ENCODE measurements at regions of chr13 and their contacts with region 1.

Region 1: GRCh38 chr13:30465585-30466357 is at the start of gene HMGB1:
- DNase-seq: peak; percentile 86
- ATAC-seq: peak; percentile 83
- H3K4me3 Mint-ChIP-seq: peak within 1 kb of the TSS; percentile 93
- H3K27ac Mint-ChIP-seq: peak within 1 kb of the TSS; percentile 99
- H3K4me1 Mint-ChIP-seq: peaks cover 42% of the 10 kb centered on the region
- H3K27me3 Mint-ChIP-seq: peaks cover 3% of the 10 kb centered on the region
- CTCF ChIP-seq: no peak
- total RNA-seq, gene HMGB1: 338 and 354 TPM in 2 replicates

Region 2: GRCh38 chr13:29771247-29771646 is 694.5 kb before region 1 on chr13:
- CTCF ChIA-PET with region 1: no interaction called
- POLR2A ChIA-PET with region 1: no interaction called
- intact Hi-C with region 1: loop called (anchors 5 kb)
- DNase-seq: no peak
- ATAC-seq: peak; percentile 49
- H3K4me3 Mint-ChIP-seq: no peak overlapping the region
- H3K27ac Mint-ChIP-seq: no peak overlapping the region
- H3K4me1 Mint-ChIP-seq: peaks cover 5% of the 10 kb centered on the region
- H3K27me3 Mint-ChIP-seq: no peaks in the 10 kb centered on the region
- CTCF ChIP-seq: peak; percentile 29

Region 3: GRCh38 chr13:30306762-30307193 is 159.0 kb before region 1 on chr13:
- CTCF ChIA-PET with region 1: interaction called, 4 read pairs
- POLR2A ChIA-PET with region 1: interaction called, 12 read pairs
- intact Hi-C with region 1: loop called (anchors 1 kb)
- DNase-seq: peak; percentile 86
- ATAC-seq: peak; percentile 86
- H3K4me3 Mint-ChIP-seq: peak overlapping the region; percentile 90
- H3K27ac Mint-ChIP-seq: peak overlapping the region; percentile 85
- H3K4me1 Mint-ChIP-seq: peaks cover 72% of the 10 kb centered on the region
- H3K27me3 Mint-ChIP-seq: no peaks in the 10 kb centered on the region
- CTCF ChIP-seq: no peak

Region 4: DNA sequence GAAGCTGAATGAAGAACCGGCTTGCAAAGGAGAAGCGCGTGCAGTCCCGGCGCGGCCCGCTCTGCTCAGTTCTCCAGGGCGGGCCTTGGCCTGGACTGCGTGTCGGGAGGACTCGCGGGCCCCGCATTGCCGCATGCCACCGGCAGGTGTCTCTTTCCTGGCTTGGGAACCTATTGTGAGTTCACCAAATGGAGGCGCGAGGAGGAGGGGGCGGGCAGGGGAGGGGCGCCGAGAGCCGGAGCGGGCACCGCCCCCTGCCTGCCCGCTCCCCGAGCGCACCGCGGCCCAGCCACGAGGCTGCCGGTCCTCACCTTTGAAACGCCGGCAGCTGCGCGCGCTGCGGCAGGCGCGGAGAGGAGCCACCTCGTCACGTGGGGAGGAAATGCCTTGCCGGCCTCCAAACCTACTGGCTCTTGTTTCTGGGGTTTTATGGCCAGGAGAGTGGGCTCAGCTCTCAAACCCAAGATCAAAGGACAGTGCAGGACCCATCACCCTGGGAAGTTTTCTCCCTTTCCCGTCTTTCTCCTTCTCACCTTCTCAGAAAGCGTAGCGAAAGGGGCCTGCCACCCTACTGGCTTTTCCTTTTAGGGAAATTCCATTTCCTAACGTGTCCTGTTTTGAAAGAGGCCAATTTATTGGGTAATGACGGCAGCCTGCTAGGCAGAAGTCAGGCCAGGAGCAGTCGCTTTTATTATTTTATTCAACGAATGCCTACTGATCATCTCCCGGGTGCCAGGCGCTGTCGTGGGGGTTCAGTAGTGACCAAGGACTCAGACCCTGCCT is 57.3 kb before region 1 on chr13:
- CTCF ChIA-PET with region 1: interaction called, 3 read pairs
- POLR2A ChIA-PET with region 1: interaction called, 13 read pairs
- intact Hi-C with region 1: loop called (anchors 1 kb)
- DNase-seq: peak; percentile 85
- ATAC-seq: peak; percentile 94
- H3K4me3 Mint-ChIP-seq: peak overlapping the region; percentile 62
- H3K27ac Mint-ChIP-seq: peak overlapping the region; percentile 79
- H3K4me1 Mint-ChIP-seq: peaks cover 53% of the 10 kb centered on the region
- H3K27me3 Mint-ChIP-seq: no peaks in the 10 kb centered on the region
- CTCF ChIP-seq: no peak

Region 5: GRCh38 chr13:30551189-30551588 is 85.4 kb after region 1 on chr13:
- CTCF ChIA-PET with region 1: no interaction called
- POLR2A ChIA-PET with region 1: interaction called, 6 read pairs
- intact Hi-C with region 1: loop called (anchors 1 kb)
- DNase-seq: no peak
- ATAC-seq: peak; percentile 85
- H3K4me3 Mint-ChIP-seq: no peak overlapping the region
- H3K27ac Mint-ChIP-seq: no peak overlapping the region
- H3K4me1 Mint-ChIP-seq: peaks cover 11% of the 10 kb centered on the region
- H3K27me3 Mint-ChIP-seq: no peaks in the 10 kb centered on the region
- CTCF ChIP-seq: no peak

Region 6: DNA sequence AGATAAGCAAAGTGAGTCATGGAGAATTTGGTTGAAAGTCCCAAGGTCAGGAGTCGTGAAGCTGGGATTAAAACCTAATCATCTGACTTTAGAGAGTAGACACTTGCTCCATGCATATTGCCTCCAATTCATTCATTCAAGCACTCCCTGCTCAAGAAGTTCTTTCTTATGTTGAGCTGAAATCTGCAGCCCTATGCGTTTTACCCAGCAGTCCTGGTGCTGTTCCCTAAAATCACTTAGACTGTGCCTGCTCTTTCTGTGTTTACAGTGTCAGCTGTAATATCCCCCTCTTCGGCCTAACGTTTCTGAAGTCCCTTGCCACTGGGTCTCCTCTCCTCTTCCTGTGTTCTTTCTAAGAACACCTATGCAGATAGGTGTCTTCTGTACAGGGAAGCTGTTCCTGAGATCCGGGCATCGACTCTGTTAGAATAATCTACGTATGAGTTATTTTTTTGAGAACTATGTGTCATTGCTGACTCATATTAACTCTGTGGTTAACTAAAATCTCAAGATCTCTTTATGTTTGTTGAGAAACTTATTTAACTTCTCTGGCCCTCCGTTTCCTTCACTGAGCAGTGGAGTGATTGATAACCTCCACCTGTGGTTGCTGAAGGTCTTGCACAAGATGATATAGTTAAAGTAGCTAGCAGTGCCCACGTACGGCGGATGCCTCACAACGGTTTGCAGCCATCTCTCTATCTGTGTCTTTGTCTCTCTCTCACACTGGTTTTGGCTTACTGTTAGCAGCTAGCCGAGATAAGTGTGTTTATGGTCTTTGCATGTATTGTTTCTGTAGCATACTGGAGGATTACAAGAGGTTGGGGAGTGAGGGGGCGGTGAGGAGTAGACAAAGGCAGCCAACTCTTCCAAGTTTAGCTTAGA is 274.2 kb after region 1 on chr13:
- CTCF ChIA-PET with region 1: no interaction called
- POLR2A ChIA-PET with region 1: interaction called, 4 read pairs
- intact Hi-C with region 1: loop called (anchors 1 kb)
- DNase-seq: no peak
- ATAC-seq: peak; percentile 26
- H3K4me3 Mint-ChIP-seq: peak overlapping the region; percentile 74
- H3K27ac Mint-ChIP-seq: peak overlapping the region; percentile 72
- H3K4me1 Mint-ChIP-seq: peaks cover 91% of the 10 kb centered on the region
- H3K27me3 Mint-ChIP-seq: no peaks in the 10 kb centered on the region
- CTCF ChIP-seq: no peak